Naive thymus-derived CD4-positive, alpha-beta T cell (primary cell): ENCODE measurements at regions of chr19 and their contacts with region 1.

Region 1: DNA sequence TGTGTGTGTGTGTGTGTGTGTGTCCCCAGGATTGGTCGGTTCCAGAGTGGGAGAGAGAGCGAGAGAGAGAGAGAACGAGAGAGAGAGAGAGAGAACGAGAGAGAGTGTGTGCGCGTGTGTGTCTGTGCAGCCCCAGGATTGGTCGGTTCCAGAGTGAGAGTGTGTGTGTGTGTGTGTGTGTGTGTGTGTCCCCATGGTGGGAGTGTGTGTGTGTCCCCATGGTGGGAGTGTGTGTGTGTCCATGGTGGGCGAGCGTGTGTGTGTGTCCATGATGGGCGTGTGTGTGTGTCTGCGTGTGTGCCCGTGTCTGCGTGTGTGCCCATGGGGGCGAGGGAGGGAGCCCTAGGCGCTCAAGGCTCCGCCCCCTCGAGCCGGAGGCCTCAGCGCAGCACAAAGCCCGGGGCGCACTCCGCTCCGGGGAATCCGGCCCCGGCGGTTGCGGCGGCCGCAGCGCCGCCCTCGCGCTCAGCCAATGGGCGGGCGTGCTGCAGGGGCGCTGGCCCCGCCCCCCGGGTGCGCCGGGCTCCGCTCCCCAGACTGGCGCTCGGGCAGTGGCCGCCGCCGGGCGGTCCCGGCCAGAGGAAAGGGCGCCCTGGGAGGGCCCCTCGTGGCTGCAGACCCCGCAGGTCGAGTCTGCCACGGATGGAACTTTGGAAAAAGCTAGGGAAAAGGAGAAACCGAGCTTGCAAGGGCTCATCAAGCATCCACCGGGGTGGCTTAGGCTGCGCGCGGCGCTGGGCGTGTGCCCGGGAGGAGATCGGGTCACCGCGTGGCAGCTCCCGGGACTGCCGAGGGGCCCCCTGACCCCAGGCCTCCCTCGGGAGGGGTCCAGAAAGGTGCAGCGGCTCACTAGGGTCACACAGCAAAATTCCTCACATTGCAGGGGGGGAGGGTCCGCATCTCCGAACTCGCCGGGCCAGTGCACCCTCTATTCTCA is 96.2 kb downstream of the INSR start:
- DNase-seq: peak; percentile 91 to 95 (median 94)
- ATAC-seq: peak; percentile 92
- H3K4me3 ChIP-seq: peak overlapping the region; percentile 75
- H3K4me3 Mint-ChIP-seq: peak overlapping the region; percentile 88 to 99 (median 94)
- H3K27ac ChIP-seq: peak overlapping the region; percentile 71
- H3K27ac Mint-ChIP-seq: peak overlapping the region; percentile 95 to 100 (median 97)
- H3K4me1 ChIP-seq: peaks cover 12 to 15% of the 10 kb centered on the region in 2 donors
- H3K4me1 Mint-ChIP-seq: peaks cover 0 to 20% (median 14%) of the 10 kb centered on the region in 7 donors
- H3K27me3 ChIP-seq: no peaks in the 10 kb centered on the region
- H3K27me3 Mint-ChIP-seq: peaks cover 0 to 47% (median 0%) of the 10 kb centered on the region in 5 donors

Region 2: DNA sequence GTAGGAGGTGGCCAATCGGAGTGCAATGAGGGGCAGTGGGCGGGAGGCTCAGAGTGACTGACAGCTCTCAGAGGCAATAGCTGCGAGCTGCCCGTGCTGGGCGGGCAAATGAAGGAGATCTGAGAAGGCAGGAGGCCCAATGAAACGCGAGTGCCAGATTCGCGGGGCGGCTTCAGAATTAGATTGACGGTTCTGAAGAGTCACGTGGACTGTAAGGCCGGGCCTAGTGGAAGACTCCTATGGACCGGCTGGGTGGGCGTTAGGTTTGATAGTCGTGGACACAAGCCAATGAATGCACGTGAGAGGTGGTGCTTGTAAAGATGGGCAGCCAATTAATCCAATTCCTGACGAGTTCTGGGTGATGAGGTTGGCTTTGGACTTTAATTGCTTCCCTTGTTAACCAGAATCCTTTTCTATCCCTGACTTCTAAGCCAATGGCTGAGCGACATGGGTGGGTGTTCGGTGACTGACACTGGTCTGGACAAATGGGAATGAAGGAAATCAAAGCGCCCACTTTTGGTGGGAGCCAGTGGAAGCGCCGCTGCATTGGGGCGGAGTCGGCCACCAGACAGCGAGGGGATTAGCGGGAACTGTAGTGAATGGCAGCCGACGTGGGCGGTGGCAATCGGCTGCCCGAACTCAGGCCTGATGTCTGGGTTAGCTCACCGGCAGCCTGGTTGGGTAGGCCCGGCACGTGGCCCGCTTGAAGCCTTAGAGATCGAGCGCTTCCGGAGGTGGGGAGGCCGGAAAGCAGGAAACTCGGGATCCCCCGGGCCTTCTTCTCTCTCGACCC is 772.9 kb before region 1 on chr19:
- CTCF ChIA-PET with region 1: no interaction called
- POLR2A ChIA-PET with region 1: no interaction called
- intact Hi-C with region 1: loop called in 1 of 2 experiments (anchors 1 kb)
- DNase-seq: peak; percentile 66 to 100 (median 99)
- ATAC-seq: peak; percentile 89
- H3K4me3 ChIP-seq: peak overlapping the region; percentile 39
- H3K4me3 Mint-ChIP-seq: peak overlapping the region; percentile 69 to 87 (median 78)
- H3K27ac ChIP-seq: peak overlapping the region; percentile 77
- H3K27ac Mint-ChIP-seq: peak overlapping the region; percentile 78 to 97 (median 94)
- H3K4me1 ChIP-seq: peaks cover 15 to 32% of the 10 kb centered on the region in 2 donors
- H3K4me1 Mint-ChIP-seq: peaks cover 18 to 48% (median 41%) of the 10 kb centered on the region in 7 donors
- H3K27me3 ChIP-seq: no peaks in the 10 kb centered on the region
- H3K27me3 Mint-ChIP-seq: no peaks in the 10 kb centered on the region

Region 3: GRCh38 chr19:7149956-7150705 is 47.9 kb before region 1 on chr19:
- CTCF ChIA-PET with region 1: no interaction called
- POLR2A ChIA-PET with region 1: no interaction called
- intact Hi-C with region 1: loop called in 1 of 2 experiments (anchors 2 kb)
- DNase-seq: no peak
- ATAC-seq: no peak
- H3K4me3 ChIP-seq: no peak overlapping the region
- H3K4me3 Mint-ChIP-seq: no peak overlapping the region
- H3K27ac ChIP-seq: no peak overlapping the region
- H3K27ac Mint-ChIP-seq: peak overlapping the region in 1 of 9 donors; percentile 77
- H3K4me1 ChIP-seq: no peaks in the 10 kb centered on the region
- H3K4me1 Mint-ChIP-seq: no peaks in the 10 kb centered on the region
- H3K27me3 ChIP-seq: no peaks in the 10 kb centered on the region
- H3K27me3 Mint-ChIP-seq: no peaks in the 10 kb centered on the region

Region 4: DNA sequence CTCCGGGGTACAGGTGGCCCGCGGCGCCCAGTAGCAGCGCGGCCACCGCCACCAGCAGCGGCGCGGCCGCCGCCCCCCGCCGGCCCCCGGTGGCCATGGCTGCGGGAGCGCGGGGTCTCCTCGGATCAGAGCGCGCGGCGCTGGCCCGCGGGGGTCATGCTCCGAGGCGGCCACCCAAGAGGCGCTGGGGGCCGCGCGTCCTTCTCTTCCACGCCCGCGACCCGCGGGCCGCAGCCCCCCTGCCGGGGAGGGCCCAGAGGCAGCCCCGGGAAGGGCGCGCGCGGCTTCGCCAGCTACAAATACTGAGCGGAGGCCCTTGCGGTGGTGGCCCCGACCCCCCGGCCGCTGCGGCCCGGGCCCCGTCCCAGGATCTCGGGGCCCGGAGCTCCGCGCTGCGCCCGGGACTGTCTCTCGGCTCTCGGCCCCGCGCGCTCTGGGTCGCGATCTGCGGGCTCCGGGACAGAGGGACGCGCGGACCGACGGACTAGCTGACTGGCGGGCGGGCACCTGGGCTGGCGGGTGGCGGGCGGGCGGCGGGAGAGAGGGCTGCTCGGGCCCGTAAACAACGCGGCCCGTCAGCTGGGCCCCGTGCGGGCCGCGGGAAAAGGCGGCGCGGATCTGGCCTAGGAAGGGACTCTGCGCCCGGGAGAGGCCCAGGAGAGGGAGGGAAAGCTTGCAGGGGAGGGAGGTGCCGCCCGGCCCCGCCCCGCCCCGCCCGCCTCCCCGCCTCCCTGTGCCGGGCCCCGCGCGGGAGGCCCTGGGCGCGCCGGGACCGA is 96.0 kb after region 1 on chr19 and contains the start of gene INSR:
- CTCF ChIA-PET with region 1: no interaction called
- POLR2A ChIA-PET with region 1: no interaction called
- intact Hi-C with region 1: loop called (anchors 1 kb)
- DNase-seq: peak in 8 of 9 donors; percentile 18 to 73 (median 30)
- ATAC-seq: peak; percentile 96
- H3K4me3 ChIP-seq: peak within 1 kb of the TSS; percentile 47
- H3K4me3 Mint-ChIP-seq: peak within 1 kb of the TSS; percentile 64 to 89 (median 78)
- H3K27ac ChIP-seq: no peak within 1 kb of the TSS
- H3K27ac Mint-ChIP-seq: peak within 1 kb of the TSS in 1 of 9 donors; percentile 53
- H3K4me1 ChIP-seq: peaks cover 0 to 7% of the 10 kb centered on the region in 2 donors
- H3K4me1 Mint-ChIP-seq: peaks cover 0 to 22% (median 14%) of the 10 kb centered on the region in 7 donors
- H3K27me3 ChIP-seq: no peaks in the 10 kb centered on the region
- H3K27me3 Mint-ChIP-seq: peaks cover 14 to 44% (median 29%) of the 10 kb centered on the region in 5 donors
- total RNA-seq, gene INSR: 0.89 to 9.9 (median 3.9) TPM

Region 5: DNA sequence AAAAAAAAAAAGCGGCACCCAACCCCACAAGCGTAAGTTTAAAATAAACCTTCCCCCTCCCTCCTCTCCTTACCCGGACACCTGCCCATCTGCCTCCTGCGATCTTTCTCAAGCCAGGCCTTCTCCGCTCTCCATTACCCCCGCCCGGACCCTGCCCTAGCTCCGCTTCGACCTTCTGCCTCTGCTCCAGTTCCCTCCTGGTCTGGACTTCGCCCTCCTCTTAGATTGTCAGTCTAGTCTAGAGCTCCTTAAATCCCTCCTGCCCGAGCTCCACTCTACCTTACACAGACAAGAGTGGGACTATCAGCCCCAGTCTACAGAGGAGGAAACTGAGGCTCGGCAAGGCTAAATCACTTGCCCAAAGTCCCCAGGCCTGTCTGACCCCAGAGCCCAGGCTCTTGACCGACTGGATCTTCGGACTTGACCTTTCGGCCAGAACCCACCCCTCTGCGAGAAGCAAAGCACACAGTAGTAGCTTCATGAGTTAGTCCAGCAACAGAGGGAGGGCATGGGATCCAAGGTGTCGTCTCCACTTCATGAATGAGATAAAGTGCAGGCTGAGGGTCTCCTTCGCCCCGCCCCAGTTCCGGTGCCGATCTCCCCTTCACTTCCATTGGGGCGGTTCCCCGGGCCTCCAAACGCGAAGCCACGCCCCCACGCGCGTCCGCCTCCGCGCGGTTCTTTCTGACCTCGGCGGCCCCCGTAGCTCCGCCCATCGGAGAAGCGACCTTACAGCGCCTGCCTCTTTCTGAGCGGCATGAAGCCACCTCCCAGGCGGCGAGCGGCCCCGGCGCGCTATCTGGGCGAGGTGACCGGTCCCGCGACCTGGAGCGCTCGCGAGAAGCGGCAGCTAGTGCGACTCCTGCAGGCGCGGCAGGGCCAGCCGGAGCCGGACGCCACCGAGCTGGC is 721.8 kb after region 1 on chr19 and contains the start of gene SNAPC2:
- CTCF ChIA-PET with region 1: no interaction called
- POLR2A ChIA-PET with region 1: no interaction called
- intact Hi-C with region 1: loop called in 1 of 2 experiments (anchors 5 kb)
- DNase-seq: peak; percentile 95 to 99 (median 98)
- ATAC-seq: peak; percentile 71
- H3K4me3 ChIP-seq: peak within 1 kb of the TSS; percentile 86
- H3K4me3 Mint-ChIP-seq: peak within 1 kb of the TSS; percentile 88 to 97 (median 94)
- H3K27ac ChIP-seq: peak within 1 kb of the TSS; percentile 75
- H3K27ac Mint-ChIP-seq: peak within 1 kb of the TSS; percentile 76 to 97 (median 92)
- H3K4me1 ChIP-seq: peaks cover 25 to 34% of the 10 kb centered on the region in 2 donors
- H3K4me1 Mint-ChIP-seq: peaks cover 15 to 52% (median 38%) of the 10 kb centered on the region in 7 donors
- H3K27me3 ChIP-seq: peaks cover 3 to 20% of the 10 kb centered on the region in 2 donors
- H3K27me3 Mint-ChIP-seq: peaks cover 12 to 33% (median 14%) of the 10 kb centered on the region in 5 donors
- total RNA-seq, gene SNAPC2: 12.3 to 24.4 (median 21.4) TPM

Region 6: GRCh38 chr19:8321060-8321985 is 1123.3 kb after region 1 on chr19 and contains the starts of genes NDUFA7 and RPS28:
- CTCF ChIA-PET with region 1: no interaction called
- POLR2A ChIA-PET with region 1: no interaction called
- intact Hi-C with region 1: loop called in 1 of 2 experiments (anchors 1 kb)
- DNase-seq: peak; percentile 94 to 97 (median 96)
- ATAC-seq: peak; percentile 98
- H3K4me3 ChIP-seq: peak within 1 kb of the TSS; percentile 98
- H3K4me3 Mint-ChIP-seq: peak within 1 kb of the TSS; percentile 90 to 99 (median 98)
- H3K27ac ChIP-seq: peak within 1 kb of the TSS; percentile 96
- H3K27ac Mint-ChIP-seq: peak within 1 kb of the TSS; percentile 94 to 99 (median 98)
- H3K4me1 ChIP-seq: peaks cover 25% of the 10 kb centered on the region in 2 donors
- H3K4me1 Mint-ChIP-seq: peaks cover 16 to 44% (median 29%) of the 10 kb centered on the region in 7 donors
- H3K27me3 ChIP-seq: no peaks in the 10 kb centered on the region
- H3K27me3 Mint-ChIP-seq: no peaks in the 10 kb centered on the region
- total RNA-seq, gene NDUFA7: 16.8 to 50.3 (median 30.0) TPM
- total RNA-seq, gene RPS28: 2,319 to 4,111 (median 3,327) TPM